ENCODE measurements at regions of chr7 and their contacts with region 1.

Region 1: DNA sequence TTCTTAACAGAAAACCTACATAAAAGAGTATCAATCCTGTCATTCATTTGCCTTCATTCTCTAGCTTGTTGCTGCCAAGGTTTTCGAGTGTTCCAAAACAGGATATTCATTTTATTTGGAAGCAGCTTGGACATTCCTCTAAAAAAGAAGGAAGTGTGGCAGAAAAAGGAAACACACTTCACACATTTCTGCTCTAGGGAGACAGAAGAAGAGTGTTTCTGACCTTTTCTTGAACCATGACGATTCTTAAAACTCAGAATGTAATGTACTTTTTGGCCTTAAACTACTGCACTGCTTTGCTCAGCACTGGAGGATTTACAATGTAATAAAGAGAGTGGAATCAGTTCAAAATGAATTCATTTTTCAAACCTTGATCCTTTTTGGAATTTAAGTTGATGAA is 81.3 kb downstream of the SEMA3A start:
- DNase-seq: no peak
- ATAC-seq: no peak

Region 2: GRCh38 chr7:83970081-83970480 is 143.2 kb before region 1 on chr7:
- intact Hi-C with region 1: no loop called
- DNase-seq: no peak
- ATAC-seq: no peak

Region 3: GRCh38 chr7:83996879-83997278 is 116.4 kb before region 1 on chr7:
- intact Hi-C with region 1: no loop called
- DNase-seq: no peak
- ATAC-seq: no peak

Region 4: DNA sequence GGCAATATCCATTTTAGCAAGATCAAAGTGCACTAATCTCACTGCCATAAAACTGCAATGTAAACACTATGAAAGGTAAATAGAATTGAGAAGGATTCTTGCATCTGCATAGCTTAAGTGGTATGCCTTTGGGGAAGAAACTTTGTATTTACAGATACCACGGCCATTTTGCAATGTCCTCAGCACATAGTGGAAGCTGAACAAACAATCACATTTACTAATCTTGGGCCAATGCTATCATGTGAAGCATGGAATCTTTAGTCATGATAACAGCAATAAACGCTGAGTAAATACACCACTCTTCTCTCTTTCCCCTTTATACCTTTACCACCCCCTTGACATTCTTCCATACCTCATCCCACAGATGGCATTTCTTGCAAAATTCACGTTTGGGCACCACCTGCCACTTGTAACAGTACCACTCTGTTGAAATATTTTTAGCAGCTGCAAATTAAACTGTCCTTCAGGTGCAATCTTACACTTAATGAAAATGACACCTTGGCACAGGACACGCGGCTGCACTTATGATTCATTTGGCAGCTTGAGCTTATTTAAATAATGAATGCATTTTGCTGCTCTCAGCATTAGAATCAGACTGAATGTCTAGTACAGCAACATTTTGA is 90.5 kb before region 1 on chr7:
- intact Hi-C with region 1: loop called (anchors 5 kb)
- DNase-seq: peak; percentile 41
- ATAC-seq: no peak

Region 5: GRCh38 chr7:84181628-84182027 is 68.3 kb after region 1 on chr7:
- intact Hi-C with region 1: loop called (anchors 5 kb)
- DNase-seq: no peak
- ATAC-seq: no peak

Region 6: DNA sequence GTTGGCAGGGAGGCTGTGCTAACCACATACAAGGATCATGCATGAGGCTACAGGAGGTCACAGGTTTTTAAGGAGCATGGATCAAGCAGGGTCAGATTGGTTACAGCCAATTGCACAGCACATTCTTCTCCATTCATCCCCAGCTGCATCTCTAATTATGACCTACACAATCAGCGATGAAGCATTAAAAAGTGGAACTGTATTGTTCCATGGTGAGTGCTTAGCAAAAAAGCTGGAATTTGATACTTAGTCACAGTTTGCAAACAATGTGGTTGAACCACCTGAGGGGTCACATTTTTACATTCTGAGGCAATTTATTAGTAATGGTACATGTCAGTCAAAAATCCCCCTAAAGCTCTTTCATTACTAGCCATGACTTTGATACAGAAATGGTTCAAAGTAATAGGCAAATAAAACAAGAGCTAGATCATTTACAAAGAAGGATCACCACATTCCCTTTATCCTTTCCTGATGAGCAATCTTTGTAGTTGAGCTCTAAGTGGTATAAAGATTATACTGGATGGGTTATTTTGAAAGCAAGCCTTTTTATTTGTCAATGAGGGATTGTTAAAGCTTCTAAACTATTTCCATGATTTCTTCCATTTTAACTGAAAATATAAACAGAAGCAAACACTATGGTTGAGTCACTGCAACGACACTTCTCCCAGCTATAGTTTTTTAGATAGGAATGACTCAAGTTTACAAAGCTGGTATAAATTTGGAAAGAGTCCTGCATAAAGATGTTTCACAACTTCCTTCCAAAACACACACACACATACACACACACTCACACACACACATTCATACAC is 299.1 kb after region 1 on chr7:
- intact Hi-C with region 1: no loop called
- DNase-seq: no peak
- ATAC-seq: no peak

Measured in Right ventricle myocardium inferior (tissue), 1 donor.